Left cardiac atrium (tissue), 4 donors: ENCODE measurements at regions of chr19 and their contacts with region 1.

Region 1: GRCh38 chr19:39390755-39391592 is at the starts of genes MED29 and PAF1:
- DNase-seq: peak; percentile 97
- ATAC-seq: peak; percentile 97
- total RNA-seq, gene MED29: 21.3 to 25.1 TPM
- total RNA-seq, gene PAF1: 34.5 to 38.4 TPM

Region 2: GRCh38 chr19:39297654-39298634 is 93.0 kb before region 1 on chr19:
- intact Hi-C with region 1: no loop called
- DNase-seq: no peak
- ATAC-seq: peak; percentile 71 to 83

Region 3: DNA sequence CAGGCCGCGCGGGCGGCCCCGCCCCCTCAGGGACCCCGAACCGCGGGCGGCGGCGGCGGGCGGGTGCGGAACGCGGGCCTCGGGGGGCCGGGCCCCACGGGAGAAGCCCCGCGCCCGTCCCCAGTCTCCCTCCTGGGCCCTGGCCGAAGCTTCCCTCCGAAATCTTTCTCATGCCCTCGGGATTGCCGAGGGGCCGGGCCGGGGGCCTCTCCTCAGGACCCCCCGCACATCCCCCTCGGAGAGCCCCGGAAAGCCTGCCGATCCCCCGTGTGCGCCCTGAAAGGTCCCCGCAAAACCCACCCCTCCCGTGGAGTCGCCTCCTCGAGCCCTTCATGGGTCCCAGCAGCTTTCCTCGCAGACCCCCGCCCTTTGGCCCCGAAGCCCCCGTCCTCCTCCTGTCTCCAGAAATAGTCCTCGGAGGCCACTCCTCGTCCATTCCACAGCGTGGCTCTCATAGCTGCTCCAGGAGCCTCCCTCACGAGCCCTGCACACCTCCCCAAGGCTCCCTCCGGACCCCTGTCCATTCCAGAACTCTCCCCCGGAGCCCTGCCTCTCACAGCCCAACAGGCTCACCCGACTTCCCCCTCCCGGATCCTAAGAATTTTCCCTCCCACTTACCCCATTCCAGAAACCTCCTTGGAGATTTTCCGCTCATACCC is 48.2 kb before region 1 on chr19:
- intact Hi-C with region 1: loop called in 1 of 2 experiments (anchors 1 kb)
- DNase-seq: peak; percentile 36
- ATAC-seq: no peak

Region 4: GRCh38 chr19:39539519-39540332 is 148.8 kb after region 1 on chr19 and contains the start of gene EID2:
- intact Hi-C with region 1: no loop called
- DNase-seq: peak; percentile 97
- ATAC-seq: peak; percentile 98 to 99
- total RNA-seq, gene EID2: 11.0 to 14.8 TPM